GM12878 (cell line): ENCODE measurements at regions of chr3 and their contacts with region 1.

Region 1: DNA sequence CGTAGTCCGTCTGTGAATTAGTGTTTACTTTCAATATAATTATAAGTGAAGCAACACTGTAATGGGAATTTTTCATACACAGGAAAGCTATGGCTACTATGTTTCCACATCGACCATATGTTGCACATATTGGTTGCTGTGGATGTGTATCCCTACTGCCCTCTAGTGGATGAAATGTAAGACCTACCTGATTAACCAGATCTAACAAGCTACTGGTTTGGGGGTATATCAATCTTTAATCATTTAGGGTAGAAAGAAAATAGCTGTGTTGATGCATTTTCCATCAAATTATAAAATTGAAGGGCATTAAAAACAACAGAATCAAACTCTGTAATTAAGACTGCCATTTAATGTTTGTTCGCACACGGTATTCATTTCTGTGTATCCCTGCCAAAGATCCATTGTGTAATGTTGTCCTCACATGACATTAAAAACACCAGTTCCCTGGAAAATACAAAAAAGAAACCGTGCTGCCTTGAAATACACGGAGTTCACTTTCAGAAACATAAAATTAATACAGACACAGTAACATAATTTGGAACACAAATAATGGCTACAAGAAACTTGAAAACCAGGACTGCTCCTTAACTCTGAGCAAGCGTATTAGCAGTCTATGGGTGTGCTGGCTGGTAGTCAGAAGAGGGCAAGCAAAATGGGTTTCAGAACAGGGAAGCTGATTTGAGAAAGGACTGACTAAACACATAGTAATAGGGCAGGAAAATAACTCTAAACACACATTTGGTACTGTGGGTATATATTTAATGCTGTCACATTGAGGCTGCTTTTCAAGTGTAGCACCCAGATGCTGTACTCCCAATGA is 125.1 kb downstream of the TIGIT start:
- DNase-seq: no peak
- ATAC-seq: peak; percentile 96
- H3K4me3 ChIP-seq: no peak overlapping the region
- H3K27ac ChIP-seq: no peak overlapping the region; the same call in 1 of the 2 replicates
- H3K4me1 ChIP-seq: peaks cover 9% of the 10 kb centered on the region
- H3K27me3 ChIP-seq: no peaks in the 10 kb centered on the region
- CTCF ChIP-seq: peak; percentile 68 to 76 (median 75)
- EP300 ChIP-seq: no peak
- POLR2A ChIP-seq: no peak
- RAD21 ChIP-seq: peak; percentile 86

Region 2: GRCh38 chr3:114362815-114363214 is 56.1 kb before region 1 on chr3:
- CTCF ChIA-PET with region 1: interaction called, 55 read pairs
- POLR2A ChIA-PET with region 1: no interaction called
- RAD21 ChIA-PET with region 1: interaction called, 6 read pairs
- SMC1A ChIA-PET with region 1: interaction called, 22 read pairs
- in situ Hi-C with region 1: no loop called
- intact Hi-C with region 1: no loop called
- DNase-seq: no peak
- ATAC-seq: peak; percentile 87
- H3K4me3 ChIP-seq: no peak overlapping the region
- H3K27ac ChIP-seq: no peak overlapping the region
- H3K4me1 ChIP-seq: no peaks in the 10 kb centered on the region
- H3K27me3 ChIP-seq: no peaks in the 10 kb centered on the region
- CTCF ChIP-seq: peak in 2 of 3 experiments; percentile 37 to 51; a peak in 4 of 6 replicates
- EP300 ChIP-seq: no peak
- POLR2A ChIP-seq: no peak
- RAD21 ChIP-seq: peak; percentile 57

Region 3: GRCh38 chr3:114393367-114394072 is 25.4 kb before region 1 on chr3:
- CTCF ChIA-PET with region 1: interaction called, 223 read pairs
- POLR2A ChIA-PET with region 1: no interaction called
- RAD21 ChIA-PET with region 1: interaction called, 6 read pairs
- SMC1A ChIA-PET with region 1: interaction called, 14 read pairs
- in situ Hi-C with region 1: no loop called
- intact Hi-C with region 1: no loop called
- DNase-seq: no peak
- ATAC-seq: no peak
- H3K4me3 ChIP-seq: no peak overlapping the region
- H3K27ac ChIP-seq: no peak overlapping the region
- H3K4me1 ChIP-seq: no peaks in the 10 kb centered on the region
- H3K27me3 ChIP-seq: no peaks in the 10 kb centered on the region
- CTCF ChIP-seq: no peak
- EP300 ChIP-seq: no peak
- POLR2A ChIP-seq: no peak
- RAD21 ChIP-seq: no peak

Region 4: DNA sequence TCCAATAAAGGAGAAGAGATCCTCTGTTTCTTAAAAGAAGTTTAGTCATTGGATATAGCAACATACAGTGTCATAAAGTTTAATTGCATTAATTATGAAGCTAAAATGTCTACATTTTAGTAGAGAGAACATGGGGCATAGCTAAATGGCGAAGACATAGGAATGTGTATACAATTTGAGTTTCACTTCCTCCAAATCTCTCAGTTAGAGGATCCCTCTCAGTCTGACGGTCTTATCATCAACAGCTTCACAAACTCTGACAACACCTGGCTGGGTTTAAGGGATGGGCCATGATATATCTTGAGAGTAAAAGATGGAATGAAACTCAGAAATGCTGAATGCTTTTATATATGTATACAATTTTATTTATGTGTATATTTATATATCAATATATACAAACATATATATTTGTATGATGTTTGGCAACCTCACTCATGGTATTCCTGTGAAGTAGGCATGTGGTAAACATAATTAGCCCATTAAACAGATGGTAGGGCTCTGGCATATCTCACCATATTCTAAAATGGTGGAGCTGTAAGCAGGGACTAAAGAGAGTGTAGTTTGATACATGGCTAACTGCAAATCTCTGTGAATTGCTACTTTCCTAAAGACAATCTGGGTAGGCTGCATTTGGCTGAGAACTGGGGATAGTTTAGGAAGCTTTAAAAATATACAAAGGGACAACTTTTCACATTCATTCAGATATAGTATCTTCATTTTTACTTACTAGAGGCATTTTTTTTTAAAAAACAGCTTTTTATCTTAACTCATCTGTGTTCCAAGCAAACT is 13.5 kb before region 1 on chr3:
- CTCF ChIA-PET with region 1: interaction called, 32 read pairs
- POLR2A ChIA-PET with region 1: no interaction called
- RAD21 ChIA-PET with region 1: interaction called, 5 read pairs
- SMC1A ChIA-PET with region 1: interaction called, 33 read pairs
- in situ Hi-C with region 1: no loop called
- intact Hi-C with region 1: no loop called
- DNase-seq: no peak
- ATAC-seq: peak; percentile 83
- H3K4me3 ChIP-seq: no peak overlapping the region
- H3K27ac ChIP-seq: no peak overlapping the region
- H3K4me1 ChIP-seq: peaks cover 3% of the 10 kb centered on the region; the same call in 1 of the 2 replicates
- H3K27me3 ChIP-seq: no peaks in the 10 kb centered on the region
- CTCF ChIP-seq: no peak
- EP300 ChIP-seq: no peak
- POLR2A ChIP-seq: no peak
- RAD21 ChIP-seq: no peak

Region 5: DNA sequence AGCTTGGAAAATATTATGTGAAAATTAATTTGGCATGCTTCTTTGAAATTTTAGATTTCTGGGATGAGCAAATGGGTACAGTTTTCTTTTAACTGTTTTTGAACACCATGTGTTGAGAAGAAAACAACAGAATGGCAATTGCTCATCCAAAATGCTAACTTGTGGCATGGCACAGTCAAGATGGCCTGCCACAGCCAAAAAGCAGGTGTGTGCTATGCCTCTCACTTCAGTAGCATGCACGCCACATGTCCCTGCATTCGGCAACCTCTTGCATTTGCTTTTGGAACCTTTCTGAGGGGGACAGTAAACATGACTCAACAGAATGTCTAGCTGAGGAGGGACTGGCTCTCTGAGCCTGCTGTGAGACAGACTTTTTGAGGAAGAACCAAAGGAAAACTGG is 13.4 kb after region 1 on chr3:
- CTCF ChIA-PET with region 1: interaction called, 11 read pairs
- POLR2A ChIA-PET with region 1: no interaction called
- RAD21 ChIA-PET with region 1: interaction called, 5 read pairs
- SMC1A ChIA-PET with region 1: interaction called, 6 read pairs
- in situ Hi-C with region 1: no loop called
- intact Hi-C with region 1: no loop called
- DNase-seq: no peak
- ATAC-seq: no peak
- H3K4me3 ChIP-seq: no peak overlapping the region
- H3K27ac ChIP-seq: no peak overlapping the region
- H3K4me1 ChIP-seq: peaks cover 13% of the 10 kb centered on the region
- H3K27me3 ChIP-seq: no peaks in the 10 kb centered on the region
- CTCF ChIP-seq: no peak
- EP300 ChIP-seq: no peak
- POLR2A ChIP-seq: no peak
- RAD21 ChIP-seq: no peak

Region 6: DNA sequence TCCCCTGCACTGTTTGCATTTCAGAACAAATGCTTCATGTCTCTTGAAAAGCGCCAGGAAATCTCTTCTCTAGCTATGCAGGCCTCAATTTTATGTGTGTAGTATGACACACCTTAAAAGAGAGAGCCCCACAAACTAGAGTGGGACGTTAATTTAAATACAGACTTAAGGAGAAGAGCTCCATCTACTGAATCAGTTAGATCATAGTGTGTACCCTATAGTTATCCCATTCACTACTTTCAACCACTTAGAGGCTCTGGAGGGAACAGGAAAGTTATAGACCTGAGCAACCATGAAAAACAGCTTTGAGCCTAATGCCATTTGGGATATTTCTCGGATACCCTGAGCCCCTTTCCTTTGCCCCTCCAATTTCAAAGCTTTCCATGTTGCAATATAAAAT is 28.6 kb after region 1 on chr3:
- CTCF ChIA-PET with region 1: interaction called, 7 read pairs
- POLR2A ChIA-PET with region 1: no interaction called
- RAD21 ChIA-PET with region 1: interaction called, 6 read pairs
- SMC1A ChIA-PET with region 1: interaction called, 13 read pairs
- in situ Hi-C with region 1: no loop called
- intact Hi-C with region 1: no loop called
- DNase-seq: no peak
- ATAC-seq: peak; percentile 54
- H3K4me3 ChIP-seq: peak overlapping the region; percentile 58
- H3K27ac ChIP-seq: peak overlapping the region; percentile 93
- H3K4me1 ChIP-seq: peaks cover 5% of the 10 kb centered on the region
- H3K27me3 ChIP-seq: no peaks in the 10 kb centered on the region
- CTCF ChIP-seq: peak in 2 of 3 experiments; percentile 40; a peak in 4 of 6 replicates
- EP300 ChIP-seq: no peak
- POLR2A ChIP-seq: no peak
- RAD21 ChIP-seq: peak; percentile 32; the same call in 1 of the 2 replicates

Region 7: DNA sequence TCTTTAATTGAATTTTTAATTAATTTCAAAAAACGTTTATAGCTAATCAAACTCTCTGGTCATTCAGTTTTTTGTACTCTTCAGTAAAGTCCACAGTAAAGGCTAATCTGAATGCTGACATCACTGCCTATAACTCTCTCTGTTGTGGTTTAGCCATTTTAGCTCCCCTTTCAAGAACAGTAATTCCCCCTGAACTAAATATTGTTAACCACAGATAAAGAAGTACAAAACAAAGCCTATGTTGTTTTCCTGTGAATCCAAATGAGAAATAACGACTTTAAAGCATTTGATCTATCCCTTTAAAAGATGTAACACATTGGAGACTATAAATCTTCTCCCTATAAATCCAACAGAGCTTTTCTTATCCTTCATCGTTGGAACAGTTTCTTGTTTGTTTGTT is 634.0 kb after region 1 on chr3:
- CTCF ChIA-PET with region 1: no interaction called
- POLR2A ChIA-PET with region 1: no interaction called
- RAD21 ChIA-PET with region 1: no interaction called
- SMC1A ChIA-PET with region 1: no interaction called
- in situ Hi-C with region 1: no loop called
- intact Hi-C with region 1: no loop called
- DNase-seq: no peak
- ATAC-seq: 0 out of 3 replicates have a peak, but pooled peaks have one; percentile 40
- H3K4me3 ChIP-seq: no peak overlapping the region
- H3K27ac ChIP-seq: no peak overlapping the region
- H3K4me1 ChIP-seq: no peaks in the 10 kb centered on the region
- H3K27me3 ChIP-seq: no peaks in the 10 kb centered on the region
- CTCF ChIP-seq: no peak
- EP300 ChIP-seq: no peak
- POLR2A ChIP-seq: no peak
- RAD21 ChIP-seq: no peak